ENCODE measurements at regions of chr17 and their contacts with region 1.

Region 1: DNA sequence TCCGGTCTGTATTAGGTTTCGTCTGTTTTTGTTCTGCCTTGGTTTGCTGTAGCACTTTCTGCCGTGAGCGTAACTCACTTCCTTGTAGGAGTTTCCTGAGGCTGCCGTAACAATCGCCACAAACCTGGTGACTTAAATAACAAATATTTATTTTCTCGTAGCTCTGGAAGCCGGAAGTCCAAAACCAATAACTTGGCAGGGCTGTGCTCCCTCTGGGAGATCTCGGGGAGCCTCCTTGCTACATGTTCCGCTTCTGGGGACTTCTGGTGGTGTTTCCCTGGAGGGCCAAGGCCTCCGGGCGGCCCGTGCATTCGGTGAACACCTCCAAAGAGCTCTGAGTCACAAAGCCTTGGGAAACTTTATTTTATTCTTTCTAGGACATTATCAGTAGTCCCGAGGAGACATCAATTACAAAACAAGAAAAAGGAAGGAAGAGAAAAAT is 6.8 kb upstream of the WDR45B start:
- DNase-seq: peak in 2 of 6 donors; percentile 9 to 14
- ATAC-seq: peak in 3 of 4 donors; percentile 7 to 51 (median 17)
- H3K4me3 ChIP-seq: no peak overlapping the region
- H3K27ac ChIP-seq: peak overlapping the region in 2 of 4 donors; percentile 39 to 54
- H3K4me1 ChIP-seq: no peaks in the 10 kb centered on the region
- H3K27me3 ChIP-seq: no peaks in the 10 kb centered on the region
- CTCF ChIP-seq: no peak

Region 2: GRCh38 chr17:82592767-82593589 is 62.1 kb before region 1 on chr17:
- intact Hi-C with region 1: no loop called
- DNase-seq: peak in 5 of 6 donors; percentile 77 to 87 (median 87)
- ATAC-seq: peak; percentile 74 to 79 (median 76)
- H3K4me3 ChIP-seq: peak overlapping the region; percentile 41 to 54 (median 46)
- H3K27ac ChIP-seq: peak overlapping the region; percentile 72 to 96 (median 81)
- H3K4me1 ChIP-seq: peaks cover 0 to 10% (median 4%) of the 10 kb centered on the region in 3 donors
- H3K27me3 ChIP-seq: no peaks in the 10 kb centered on the region
- CTCF ChIP-seq: no peak

Region 3: DNA sequence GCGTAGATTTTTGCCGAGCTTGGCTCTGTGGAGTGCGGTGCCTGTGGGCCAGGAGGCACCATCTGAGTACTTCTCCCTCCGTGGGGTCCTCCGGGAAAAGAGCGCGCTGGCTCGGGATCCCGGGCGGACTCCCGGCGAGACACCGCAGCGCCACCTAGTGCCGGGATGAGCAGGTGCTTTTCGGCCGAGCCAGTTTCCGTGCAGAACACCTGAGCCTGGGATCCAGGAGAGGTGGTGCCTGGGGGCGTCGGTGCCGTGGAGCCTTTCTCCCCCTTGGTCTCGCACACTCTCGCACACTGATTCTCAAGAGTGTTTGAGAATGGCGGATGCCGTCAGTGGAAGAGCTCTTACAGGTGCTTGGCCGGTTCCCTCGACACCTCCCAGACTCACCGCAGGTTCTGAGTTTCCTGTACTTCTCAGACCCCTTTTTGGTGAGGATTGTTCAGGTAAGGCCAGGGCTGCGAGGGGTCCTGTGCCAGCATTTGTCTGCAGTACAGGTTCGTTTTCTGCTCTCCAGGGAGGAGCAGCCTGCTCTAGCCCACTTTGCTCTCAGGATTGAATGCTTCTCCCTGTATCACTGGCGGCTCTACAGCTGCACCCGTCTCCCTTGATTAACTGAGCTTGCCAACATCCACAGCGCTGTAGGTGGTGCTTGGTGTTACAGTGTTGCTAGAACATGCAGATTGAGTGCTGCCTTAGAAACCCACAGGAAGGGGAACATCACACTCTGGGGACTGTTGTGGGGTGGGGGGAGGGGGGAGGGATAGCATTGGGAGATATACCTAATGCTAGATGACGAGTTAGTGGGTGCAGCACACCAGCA is 120.2 kb after region 1 on chr17:
- intact Hi-C with region 1: loop called in 1 of 3 experiments (anchors 10 kb)
- DNase-seq: peak; percentile 54 to 92 (median 79)
- ATAC-seq: peak; percentile 71 to 88 (median 84)
- H3K4me3 ChIP-seq: peak overlapping the region in 1 of 4 donors; percentile 29
- H3K27ac ChIP-seq: no peak overlapping the region
- H3K4me1 ChIP-seq: no peaks in the 10 kb centered on the region
- H3K27me3 ChIP-seq: no peaks in the 10 kb centered on the region
- CTCF ChIP-seq: peak; percentile 67 to 88 (median 80)